CD4-positive, alpha-beta memory T cell (primary cell): ENCODE measurements at regions of chr1 and their contacts with region 1.

Region 1: DNA sequence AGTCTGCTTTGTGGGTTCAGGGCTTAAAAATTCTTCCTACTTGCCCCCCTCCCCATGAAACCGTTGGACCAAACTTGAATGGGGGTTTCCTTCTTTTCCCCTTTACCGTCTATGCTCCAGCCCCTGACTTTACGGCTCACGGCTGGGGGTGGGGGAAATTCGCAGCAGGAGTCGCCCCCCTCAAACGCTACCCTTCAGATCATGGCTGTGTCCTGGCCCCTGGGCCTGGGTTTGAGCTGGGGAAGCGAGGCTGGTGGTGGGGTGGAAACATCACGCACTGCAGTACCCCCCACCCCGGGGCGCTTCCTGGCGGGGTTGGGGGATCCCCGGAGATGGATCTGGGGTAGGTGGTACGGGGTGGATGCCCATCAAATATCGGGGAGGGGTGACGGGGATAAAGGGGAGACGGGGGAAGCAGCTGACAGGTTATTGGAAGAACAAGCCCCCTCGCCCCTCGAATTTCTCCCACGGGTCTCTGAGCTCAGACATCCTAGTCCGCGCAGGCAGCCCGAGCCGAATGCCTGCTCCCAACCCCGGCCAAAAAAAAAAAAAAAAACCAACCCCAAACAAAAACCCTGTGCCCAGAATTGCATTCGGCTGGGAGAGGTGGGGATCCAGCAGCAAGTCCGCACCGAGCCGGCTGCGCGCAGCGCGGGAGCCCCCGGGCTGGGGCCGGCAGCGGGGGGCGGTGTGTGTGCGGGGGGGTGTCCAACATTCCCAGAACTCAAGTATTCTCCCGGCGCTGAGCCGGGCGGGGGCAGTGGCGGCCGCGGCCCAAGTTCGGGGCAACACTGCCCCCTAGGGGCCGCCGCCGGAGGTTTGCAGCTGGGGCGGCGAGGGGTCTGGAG is 59.0 kb upstream of the ACOT11 start:
- DNase-seq: peak; percentile 65 to 84 (median 72)
- H3K4me3 ChIP-seq: peak overlapping the region; percentile 71 to 94
- H3K4me3 Mint-ChIP-seq: peak overlapping the region; percentile 88 to 96 (median 90)
- H3K27ac ChIP-seq: peak overlapping the region; percentile 72
- H3K27ac Mint-ChIP-seq: peak overlapping the region; percentile 82 to 95 (median 88)
- H3K4me1 ChIP-seq: peaks cover 39% of the 10 kb centered on the region
- H3K4me1 Mint-ChIP-seq: peaks cover 32 to 51% (median 43%) of the 10 kb centered on the region in 4 donors
- H3K27me3 ChIP-seq: no peaks in the 10 kb centered on the region
- H3K27me3 Mint-ChIP-seq: peaks cover 0 to 4% of the 10 kb centered on the region in 2 donors

Region 2: DNA sequence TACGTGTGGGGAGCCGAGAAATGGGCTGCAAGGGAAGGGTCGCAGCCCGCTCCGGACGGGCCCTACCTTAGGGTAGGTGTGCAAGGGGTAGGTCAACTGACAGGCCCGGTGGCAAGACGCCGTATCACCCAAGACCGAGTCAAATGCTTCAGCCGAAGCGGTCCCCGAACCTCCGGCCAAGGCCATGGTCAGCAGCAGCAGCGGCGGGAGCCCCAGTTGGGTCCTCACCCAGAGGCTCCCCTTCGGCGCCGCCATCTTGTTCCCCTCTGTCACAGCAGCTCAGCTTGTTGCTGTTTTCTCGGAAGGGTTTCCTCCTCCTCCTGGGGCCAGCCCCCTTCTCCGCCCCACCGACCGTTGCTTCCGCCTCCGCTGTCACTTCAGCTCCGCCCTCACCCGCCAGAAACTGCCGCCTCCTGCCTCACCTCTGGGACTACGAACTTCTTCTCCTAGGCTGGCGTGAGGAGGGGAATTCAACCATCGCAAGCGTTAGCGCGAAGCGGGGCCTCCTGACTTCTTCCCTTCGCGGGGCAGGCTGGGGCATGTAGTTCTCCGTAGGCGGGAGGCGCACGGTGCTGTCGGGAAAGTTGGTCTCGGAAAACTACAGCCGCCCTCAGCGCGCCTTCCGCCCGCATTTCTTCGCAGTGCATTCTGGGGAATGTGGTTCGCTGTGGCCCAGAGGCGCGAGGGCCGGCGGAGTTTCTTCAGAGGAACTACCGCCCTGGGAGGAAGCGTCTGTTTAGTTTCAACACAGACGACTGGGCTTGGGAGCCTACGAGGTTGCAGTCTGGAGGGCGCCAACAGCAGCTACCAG is 435.9 kb before region 1 on chr1 and contains the starts of genes TCEANC2 and TMEM59:
- CTCF ChIA-PET with region 1: interaction called, 3 read pairs
- POLR2A ChIA-PET with region 1: interaction called, 11 read pairs
- intact Hi-C with region 1: loop called (anchors 1 kb)
- DNase-seq: peak; percentile 97 to 100 (median 99)
- H3K4me3 ChIP-seq: peak within 1 kb of the TSS; percentile 98 to 99
- H3K4me3 Mint-ChIP-seq: no peak within 1 kb of the TSS
- H3K27ac ChIP-seq: peak within 1 kb of the TSS; percentile 88
- H3K27ac Mint-ChIP-seq: no peak within 1 kb of the TSS
- H3K4me1 ChIP-seq: peaks cover 59% of the 10 kb centered on the region
- H3K4me1 Mint-ChIP-seq: peaks cover 23 to 49% (median 37%) of the 10 kb centered on the region in 4 donors
- H3K27me3 ChIP-seq: no peaks in the 10 kb centered on the region
- H3K27me3 Mint-ChIP-seq: no peaks in the 10 kb centered on the region
- total RNA-seq, gene TCEANC2: 12.1 to 13.1 TPM
- total RNA-seq, gene TMEM59: 212 to 222 TPM

Region 3: GRCh38 chr1:54180701-54181360 is 308.2 kb before region 1 on chr1:
- CTCF ChIA-PET with region 1: interaction called, 41 read pairs
- POLR2A ChIA-PET with region 1: interaction called, 3 read pairs
- intact Hi-C with region 1: loop called (anchors 1 kb)
- DNase-seq: no peak
- H3K4me3 ChIP-seq: no peak overlapping the region
- H3K4me3 Mint-ChIP-seq: no peak overlapping the region
- H3K27ac ChIP-seq: no peak overlapping the region
- H3K27ac Mint-ChIP-seq: no peak overlapping the region
- H3K4me1 ChIP-seq: no peaks in the 10 kb centered on the region
- H3K4me1 Mint-ChIP-seq: peaks cover 0 to 1% (median 0%) of the 10 kb centered on the region in 4 donors
- H3K27me3 ChIP-seq: no peaks in the 10 kb centered on the region
- H3K27me3 Mint-ChIP-seq: no peaks in the 10 kb centered on the region

Region 4: GRCh38 chr1:54310439-54311328 is 178.3 kb before region 1 on chr1:
- CTCF ChIA-PET with region 1: interaction called, 18 read pairs
- POLR2A ChIA-PET with region 1: interaction called, 4 read pairs
- intact Hi-C with region 1: loop called (anchors 1 kb)
- DNase-seq: no peak
- H3K4me3 ChIP-seq: no peak overlapping the region
- H3K4me3 Mint-ChIP-seq: peak overlapping the region in 5 of 8 donors; percentile 25 to 65 (median 41)
- H3K27ac ChIP-seq: no peak overlapping the region
- H3K27ac Mint-ChIP-seq: peak overlapping the region in 6 of 7 donors; percentile 27 to 87 (median 61)
- H3K4me1 ChIP-seq: peaks cover 59% of the 10 kb centered on the region
- H3K4me1 Mint-ChIP-seq: peaks cover 37 to 80% (median 63%) of the 10 kb centered on the region in 4 donors
- H3K27me3 ChIP-seq: no peaks in the 10 kb centered on the region
- H3K27me3 Mint-ChIP-seq: no peaks in the 10 kb centered on the region

Region 5: GRCh38 chr1:54406339-54407153 is 82.5 kb before region 1 on chr1 and contains the start of gene SSBP3:
- CTCF ChIA-PET with region 1: interaction called, 44 read pairs
- POLR2A ChIA-PET with region 1: interaction called, 254 read pairs
- intact Hi-C with region 1: loop called (anchors 1 kb)
- DNase-seq: peak; percentile 93 to 94 (median 93)
- H3K4me3 ChIP-seq: peak within 1 kb of the TSS; percentile 45 to 91
- H3K4me3 Mint-ChIP-seq: peak within 1 kb of the TSS; percentile 95 to 99 (median 97)
- H3K27ac ChIP-seq: peak within 1 kb of the TSS; percentile 87
- H3K27ac Mint-ChIP-seq: peak within 1 kb of the TSS; percentile 88 to 99 (median 97)
- H3K4me1 ChIP-seq: peaks cover 67% of the 10 kb centered on the region
- H3K4me1 Mint-ChIP-seq: peaks cover 51 to 77% (median 62%) of the 10 kb centered on the region in 4 donors
- H3K27me3 ChIP-seq: no peaks in the 10 kb centered on the region
- H3K27me3 Mint-ChIP-seq: peaks cover 0 to 1% of the 10 kb centered on the region in 2 donors
- total RNA-seq, gene SSBP3: 67.6 to 87.6 TPM

Region 6: DNA sequence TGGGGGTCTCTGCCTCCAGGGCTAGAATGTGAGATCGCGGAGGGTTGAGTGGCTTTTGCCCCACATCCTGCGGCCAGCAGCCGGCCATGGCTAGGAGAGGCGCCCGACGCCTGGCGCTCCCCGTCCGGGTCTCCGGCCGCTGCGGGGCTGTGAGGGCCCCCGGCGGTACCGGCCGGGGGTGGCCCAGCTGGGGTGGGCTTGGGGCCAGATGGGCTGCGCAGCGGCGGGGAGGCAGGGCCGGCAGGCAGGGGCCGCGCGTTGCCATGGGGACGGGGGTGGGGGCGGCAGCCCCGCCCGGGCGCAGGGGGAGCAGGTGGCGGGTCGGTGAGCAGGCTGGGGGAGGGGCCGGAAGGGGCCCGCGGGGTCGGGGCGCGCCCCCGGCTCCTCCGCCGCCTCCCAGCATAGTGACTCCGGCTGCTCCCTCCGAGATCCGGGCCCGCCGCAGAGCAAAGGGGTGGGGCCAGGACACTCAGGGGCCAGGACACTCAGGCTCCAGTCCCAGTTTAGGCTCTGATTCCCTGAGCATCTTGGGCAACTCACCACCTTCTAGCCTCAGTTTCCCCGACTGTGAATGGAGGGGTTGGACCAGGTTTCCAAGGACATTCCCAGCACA is 14.3 kb before region 1 on chr1:
- CTCF ChIA-PET with region 1: interaction called, 17 read pairs
- POLR2A ChIA-PET with region 1: interaction called, 102 read pairs
- intact Hi-C with region 1: loop called (anchors 1 kb)
- DNase-seq: peak in 2 of 5 donors; percentile 33 to 38
- H3K4me3 ChIP-seq: peak overlapping the region; percentile 22 to 57
- H3K4me3 Mint-ChIP-seq: peak overlapping the region; percentile 78 to 93 (median 84)
- H3K27ac ChIP-seq: peak overlapping the region; percentile 47
- H3K27ac Mint-ChIP-seq: peak overlapping the region; percentile 87 to 97 (median 95)
- H3K4me1 ChIP-seq: peaks cover 53% of the 10 kb centered on the region
- H3K4me1 Mint-ChIP-seq: peaks cover 34 to 58% (median 45%) of the 10 kb centered on the region in 4 donors
- H3K27me3 ChIP-seq: no peaks in the 10 kb centered on the region
- H3K27me3 Mint-ChIP-seq: peaks cover 0 to 2% of the 10 kb centered on the region in 2 donors